ENCODE measurements at regions of chr1 and their contacts with region 1.

Region 1: GRCh38 chr1:35641233-35641866 is at the start of gene PSMB2:
- DNase-seq: peak; percentile 88
- ATAC-seq: peak; percentile 96
- H3K4me3 ChIP-seq: peak within 1 kb of the TSS; percentile 59 to 80
- H3K27ac ChIP-seq: peak within 1 kb of the TSS; percentile 90
- H3K4me1 ChIP-seq: peaks cover 23% of the 10 kb centered on the region
- H3K27me3 ChIP-seq: peaks cover 4% of the 10 kb centered on the region; the same call in 1 of the 2 replicates
- CTCF ChIP-seq: no peak
- total RNA-seq, gene PSMB2: 95.0 TPM

Region 2: GRCh38 chr1:35660581-35661473 is 19.5 kb after region 1 on chr1:
- CTCF ChIA-PET with region 1: no interaction called
- POLR2A ChIA-PET with region 1: interaction called, 11 read pairs
- in situ Hi-C with region 1: no loop called
- intact Hi-C with region 1: no loop called
- DNase-seq: no peak
- ATAC-seq: no peak
- H3K4me3 ChIP-seq: no peak overlapping the region
- H3K27ac ChIP-seq: no peak overlapping the region
- H3K4me1 ChIP-seq: no peaks in the 10 kb centered on the region
- H3K27me3 ChIP-seq: no peaks in the 10 kb centered on the region; the same call in 1 of the 2 replicates
- CTCF ChIP-seq: no peak

Region 3: DNA sequence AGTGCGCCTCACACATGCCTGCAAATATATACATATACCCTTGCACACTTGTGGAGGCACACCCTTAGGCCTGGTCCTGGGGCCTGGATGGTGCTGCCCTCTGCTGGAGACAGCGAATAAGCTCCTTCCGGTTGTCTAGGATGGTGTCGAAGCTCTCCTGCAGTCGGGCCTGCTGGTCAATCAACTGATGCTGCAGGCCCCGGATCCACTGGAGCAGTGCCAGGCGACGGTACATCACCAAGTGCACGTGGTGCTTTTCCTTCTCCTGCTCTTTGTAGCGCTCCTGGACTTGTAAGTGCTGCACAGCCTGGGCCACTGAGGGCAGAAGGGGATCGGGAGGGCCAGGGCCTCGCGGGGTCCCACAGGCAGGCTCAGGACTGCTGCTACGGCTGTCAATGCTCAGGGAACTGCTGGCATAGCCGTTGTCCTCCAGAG is 74.2 kb after region 1 on chr1:
- CTCF ChIA-PET with region 1: interaction called, 8 read pairs
- POLR2A ChIA-PET with region 1: no interaction called
- in situ Hi-C with region 1: no loop called
- intact Hi-C with region 1: loop called (anchors 5 kb)
- DNase-seq: no peak
- ATAC-seq: peak; percentile 74
- H3K4me3 ChIP-seq: no peak overlapping the region
- H3K27ac ChIP-seq: no peak overlapping the region
- H3K4me1 ChIP-seq: peaks cover 7% of the 10 kb centered on the region
- H3K27me3 ChIP-seq: no peaks in the 10 kb centered on the region
- CTCF ChIP-seq: peak; percentile 94